ENCODE measurements at regions of chr17 and their contacts with region 1.

Region 1: GRCh38 chr17:28612936-28613872 is 781 bp downstream of the RSKR start:
- DNase-seq: peak; percentile 15 to 48 (median 31)
- H3K4me3 ChIP-seq: peak overlapping the region in 1 of 7 experiments; percentile 31
- H3K27ac ChIP-seq: no peak overlapping the region
- H3K4me1 ChIP-seq: peaks cover 11 to 30% (median 26%) of the 10 kb centered on the region in 4 experiments
- H3K27me3 ChIP-seq: no peaks in the 10 kb centered on the region

Region 2: DNA sequence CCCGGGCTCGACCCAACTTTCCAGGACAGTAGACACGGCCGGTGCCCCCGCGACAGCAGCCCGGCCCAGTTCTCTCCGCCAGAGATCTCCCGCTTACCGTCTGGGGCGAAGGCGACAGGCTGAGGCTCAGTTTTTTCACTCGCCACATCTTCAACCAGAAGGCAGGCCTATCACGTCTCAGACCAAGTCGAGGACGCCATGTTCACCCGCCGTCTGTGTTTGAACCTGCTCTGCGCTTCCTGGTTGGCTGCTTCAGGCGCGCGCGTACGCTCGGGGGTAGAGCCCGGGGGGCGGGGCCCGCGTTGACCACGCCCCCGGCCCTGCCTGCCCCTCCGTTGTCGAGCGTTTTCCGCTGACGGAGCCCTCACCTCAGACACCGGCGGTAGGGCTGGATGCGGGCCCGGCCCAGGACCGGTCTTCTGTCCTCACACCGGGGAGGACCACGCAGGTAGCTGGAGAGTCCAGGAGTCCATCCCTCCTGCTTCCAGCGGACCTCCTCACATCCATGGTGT is 14.3 kb before region 1 on chr17 and contains the start of gene SPAG5:
- CTCF ChIA-PET with region 1: interaction called, 32 read pairs
- POLR2A ChIA-PET with region 1: interaction called, 7 read pairs
- DNase-seq: peak; percentile 91 to 96 (median 96)
- H3K4me3 ChIP-seq: peak within 1 kb of the TSS; percentile 57 to 95 (median 89)
- H3K27ac ChIP-seq: peak within 1 kb of the TSS; percentile 80 to 93
- H3K4me1 ChIP-seq: peaks cover 11 to 27% (median 22%) of the 10 kb centered on the region in 4 experiments
- H3K27me3 ChIP-seq: no peaks in the 10 kb centered on the region

Measured in common myeloid progenitor, CD34-positive (primary cell).